Activated CD4-positive, alpha-beta T cell treated with anti-CD3 and anti-CD28 coated beads for 36 hours (primary cell): ENCODE measurements at regions of chr9 and their contacts with region 1.

Region 1: DNA sequence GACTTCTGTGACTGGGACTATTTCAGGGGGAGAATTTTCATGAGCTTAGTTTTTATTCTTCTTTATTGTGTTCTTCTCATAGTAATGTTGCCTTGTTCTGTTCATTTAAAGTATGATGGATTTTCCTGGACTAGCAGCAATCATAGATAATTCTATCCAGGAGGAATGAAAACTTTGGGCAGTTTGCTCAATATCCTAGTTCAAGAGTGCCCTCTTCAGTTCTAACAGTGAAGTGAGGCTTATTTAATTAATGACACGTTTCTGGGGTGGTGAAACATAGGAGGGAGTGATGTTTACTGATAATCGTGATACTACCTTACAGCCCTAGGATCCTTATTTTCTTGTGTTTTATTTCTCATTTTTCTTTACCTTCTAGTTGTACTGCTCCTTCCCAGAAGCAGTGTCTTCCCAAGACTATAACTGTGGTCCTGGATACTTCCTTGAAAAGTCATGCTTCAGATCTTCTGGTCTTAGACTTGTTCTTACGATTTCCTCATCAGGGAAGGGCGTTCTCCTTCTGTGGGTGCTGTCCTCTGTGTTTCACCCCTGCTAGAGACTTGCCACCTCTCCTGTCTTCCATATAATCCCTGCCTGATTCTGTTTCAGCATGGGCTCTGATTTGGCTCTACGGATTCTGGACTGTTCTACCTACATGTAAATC is 57.4 kb downstream of the CFAP95 start:
- DNase-seq: no peak
- ATAC-seq: no peak
- H3K4me3 Mint-ChIP-seq: no peak overlapping the region
- H3K27ac Mint-ChIP-seq: no peak overlapping the region
- H3K4me1 Mint-ChIP-seq: no peaks in the 10 kb centered on the region
- H3K27me3 Mint-ChIP-seq: peaks cover 5% of the 10 kb centered on the region

Region 2: GRCh38 chr9:68955330-68955729 is 922.7 kb before region 1 on chr9:
- CTCF ChIA-PET with region 1: no interaction called
- POLR2A ChIA-PET with region 1: no interaction called
- intact Hi-C with region 1: loop called in 1 of 2 experiments (anchors 5 kb)
- DNase-seq: peak; percentile 30
- ATAC-seq: peak; percentile 79
- H3K4me3 Mint-ChIP-seq: no peak overlapping the region
- H3K27ac Mint-ChIP-seq: peak overlapping the region; percentile 73
- H3K4me1 Mint-ChIP-seq: peaks cover 27% of the 10 kb centered on the region
- H3K27me3 Mint-ChIP-seq: peaks cover 20% of the 10 kb centered on the region

Region 3: GRCh38 chr9:69421908-69422801 is 455.8 kb before region 1 on chr9:
- CTCF ChIA-PET with region 1: interaction called, 3 read pairs
- POLR2A ChIA-PET with region 1: no interaction called
- intact Hi-C with region 1: loop called (anchors 2 to 10 kb)
- DNase-seq: peak; percentile 65
- ATAC-seq: peak; percentile 50
- H3K4me3 Mint-ChIP-seq: no peak overlapping the region
- H3K27ac Mint-ChIP-seq: no peak overlapping the region
- H3K4me1 Mint-ChIP-seq: no peaks in the 10 kb centered on the region
- H3K27me3 Mint-ChIP-seq: peaks cover 17% of the 10 kb centered on the region

Region 4: GRCh38 chr9:69535911-69536310 is 342.1 kb before region 1 on chr9:
- CTCF ChIA-PET with region 1: no interaction called
- POLR2A ChIA-PET with region 1: no interaction called
- intact Hi-C with region 1: loop called in 1 of 2 experiments (anchors 5 kb)
- DNase-seq: no peak
- ATAC-seq: no peak
- H3K4me3 Mint-ChIP-seq: no peak overlapping the region
- H3K27ac Mint-ChIP-seq: no peak overlapping the region
- H3K4me1 Mint-ChIP-seq: no peaks in the 10 kb centered on the region
- H3K27me3 Mint-ChIP-seq: peaks cover 3% of the 10 kb centered on the region

Region 5: GRCh38 chr9:69672596-69673310 is 205.2 kb before region 1 on chr9:
- CTCF ChIA-PET with region 1: interaction called, 7 read pairs
- POLR2A ChIA-PET with region 1: no interaction called
- intact Hi-C with region 1: loop called (anchors 1 to 2 kb)
- DNase-seq: peak; percentile 87
- ATAC-seq: peak; percentile 91
- H3K4me3 Mint-ChIP-seq: peak overlapping the region; percentile 67
- H3K27ac Mint-ChIP-seq: no peak overlapping the region
- H3K4me1 Mint-ChIP-seq: no peaks in the 10 kb centered on the region
- H3K27me3 Mint-ChIP-seq: peaks cover 19% of the 10 kb centered on the region

Region 6: DNA sequence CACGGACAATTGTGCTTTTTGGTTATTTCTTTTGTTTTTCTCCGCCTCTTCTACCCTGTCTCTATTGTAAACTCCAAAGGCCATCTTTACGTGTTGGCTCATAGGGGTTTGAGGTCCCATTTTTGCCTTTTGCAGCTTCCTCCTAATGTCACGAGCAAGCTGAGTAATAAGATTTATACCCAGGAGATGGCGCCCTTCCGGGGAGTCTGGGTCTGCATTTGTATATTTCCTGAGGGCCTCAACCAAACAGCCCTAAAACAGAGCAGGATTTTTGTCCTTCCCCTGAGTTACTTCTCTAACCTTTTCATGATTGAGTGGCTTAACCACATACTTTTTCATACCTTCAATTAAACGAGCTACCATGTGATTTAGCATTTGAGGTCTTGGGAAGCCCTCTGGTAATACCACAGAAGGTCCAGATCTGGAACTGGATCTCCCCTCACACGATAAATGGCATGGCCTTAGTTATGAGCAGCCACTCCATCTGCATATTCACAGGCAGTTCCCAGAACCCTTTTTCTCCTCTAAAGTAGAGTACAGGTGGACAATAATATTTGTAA is 68.6 kb before region 1 on chr9:
- CTCF ChIA-PET with region 1: no interaction called
- POLR2A ChIA-PET with region 1: no interaction called
- intact Hi-C with region 1: loop called (anchors 1 kb)
- DNase-seq: peak; percentile 55
- ATAC-seq: peak; percentile 65
- H3K4me3 Mint-ChIP-seq: no peak overlapping the region
- H3K27ac Mint-ChIP-seq: no peak overlapping the region
- H3K4me1 Mint-ChIP-seq: peaks cover 4% of the 10 kb centered on the region
- H3K27me3 Mint-ChIP-seq: peaks cover 2% of the 10 kb centered on the region

Region 7: DNA sequence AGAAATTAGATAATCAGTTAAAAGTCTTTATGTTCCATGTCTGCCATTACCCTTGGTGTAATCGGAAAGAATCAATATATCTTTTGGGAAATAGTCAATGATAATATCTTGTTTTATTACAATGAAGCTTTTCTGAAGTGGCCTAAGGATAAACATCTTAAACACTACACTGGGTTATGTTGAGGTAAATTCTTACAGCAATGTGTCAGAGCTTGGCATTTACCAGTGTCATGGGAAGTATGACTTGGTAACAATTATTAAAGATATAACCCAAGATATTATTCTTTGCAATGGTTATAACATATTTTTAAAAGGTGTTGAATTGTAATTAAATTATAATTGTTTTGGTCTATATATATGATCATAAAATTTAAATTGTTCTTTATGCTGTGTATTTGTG is 27.3 kb after region 1 on chr9:
- CTCF ChIA-PET with region 1: no interaction called
- POLR2A ChIA-PET with region 1: no interaction called
- intact Hi-C with region 1: loop called in 1 of 2 experiments (anchors 5 kb)
- DNase-seq: no peak
- ATAC-seq: no peak
- H3K4me3 Mint-ChIP-seq: no peak overlapping the region
- H3K27ac Mint-ChIP-seq: no peak overlapping the region
- H3K4me1 Mint-ChIP-seq: no peaks in the 10 kb centered on the region
- H3K27me3 Mint-ChIP-seq: peaks cover 22% of the 10 kb centered on the region

Region 8: DNA sequence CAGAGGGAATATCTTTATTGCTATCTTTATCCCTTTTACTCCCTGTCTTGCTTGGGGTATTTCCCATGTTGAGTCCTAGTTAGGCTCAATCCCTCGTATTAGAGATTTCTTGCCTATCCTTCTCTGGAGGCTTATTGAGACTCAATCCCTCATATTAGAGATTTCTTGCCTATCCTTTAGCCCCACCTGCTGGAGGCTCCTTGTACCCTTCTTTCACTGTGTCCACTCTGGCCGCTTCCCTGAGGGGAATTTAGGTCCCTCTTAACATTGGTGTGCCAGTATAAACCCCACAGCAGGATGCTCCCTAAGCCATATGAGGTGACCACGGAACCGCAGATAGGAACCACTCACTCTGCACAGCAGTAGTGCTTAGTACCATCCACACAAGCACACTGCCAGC is 54.9 kb after region 1 on chr9:
- CTCF ChIA-PET with region 1: no interaction called
- POLR2A ChIA-PET with region 1: no interaction called
- intact Hi-C with region 1: no loop called
- DNase-seq: peak; percentile 6
- ATAC-seq: no peak
- H3K4me3 Mint-ChIP-seq: no peak overlapping the region
- H3K27ac Mint-ChIP-seq: no peak overlapping the region
- H3K4me1 Mint-ChIP-seq: no peaks in the 10 kb centered on the region
- H3K27me3 Mint-ChIP-seq: peaks cover 12% of the 10 kb centered on the region